Activated naive CD4-positive, alpha-beta T cell treated with anti-CD3 and anti-CD28 coated beads for 36 hours (primary cell): ENCODE measurements at regions of chr14 and their contacts with region 1.

Region 1: GRCh38 chr14:53539489-53540126 is 386.5 kb upstream of the DDHD1 start:
- DNase-seq: peak; percentile 75
- H3K4me3 Mint-ChIP-seq: no peak overlapping the region
- H3K27ac Mint-ChIP-seq: no peak overlapping the region
- H3K4me1 Mint-ChIP-seq: no peaks in the 10 kb centered on the region
- H3K27me3 Mint-ChIP-seq: peaks cover 3% of the 10 kb centered on the region

Region 2: GRCh38 chr14:54175298-54175942 is 635.8 kb after region 1 on chr14:
- CTCF ChIA-PET with region 1: interaction called, 4 read pairs
- intact Hi-C with region 1: loop called (anchors 1 kb)
- DNase-seq: peak; percentile 73
- H3K4me3 Mint-ChIP-seq: no peak overlapping the region
- H3K27ac Mint-ChIP-seq: no peak overlapping the region
- H3K4me1 Mint-ChIP-seq: peaks cover 4% of the 10 kb centered on the region
- H3K27me3 Mint-ChIP-seq: peaks cover 28% of the 10 kb centered on the region